PC-3 (cell line): ENCODE measurements at regions of chr6 and their contacts with region 1.

Region 1: DNA sequence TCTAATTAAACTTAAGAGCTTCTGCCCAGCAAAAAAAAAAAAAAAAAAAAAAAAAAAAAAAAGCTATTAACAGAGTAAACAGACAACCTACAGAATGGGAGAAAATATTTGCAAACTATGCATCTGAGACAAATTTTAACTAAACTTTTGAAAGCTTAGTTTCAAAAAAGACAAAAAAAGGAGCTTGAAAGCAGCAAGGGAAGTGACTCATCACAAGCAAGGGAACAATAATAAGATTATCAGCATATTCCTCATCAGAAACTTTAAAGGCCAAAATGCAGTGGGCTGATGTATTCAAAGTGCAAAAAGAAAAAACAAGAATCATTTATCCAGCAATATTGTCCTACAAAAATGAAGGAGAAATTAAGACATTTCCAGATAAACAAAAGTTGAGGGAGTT is 158.6 kb downstream of the RNF144B start:
- DNase-seq: no peak
- ATAC-seq: no peak
- H3K4me3 ChIP-seq: no peak overlapping the region
- H3K27ac ChIP-seq: no peak overlapping the region
- H3K4me1 ChIP-seq: no peaks in the 10 kb centered on the region
- H3K27me3 ChIP-seq: peaks cover 34% of the 10 kb centered on the region
- CTCF ChIP-seq: no peak

Region 2: DNA sequence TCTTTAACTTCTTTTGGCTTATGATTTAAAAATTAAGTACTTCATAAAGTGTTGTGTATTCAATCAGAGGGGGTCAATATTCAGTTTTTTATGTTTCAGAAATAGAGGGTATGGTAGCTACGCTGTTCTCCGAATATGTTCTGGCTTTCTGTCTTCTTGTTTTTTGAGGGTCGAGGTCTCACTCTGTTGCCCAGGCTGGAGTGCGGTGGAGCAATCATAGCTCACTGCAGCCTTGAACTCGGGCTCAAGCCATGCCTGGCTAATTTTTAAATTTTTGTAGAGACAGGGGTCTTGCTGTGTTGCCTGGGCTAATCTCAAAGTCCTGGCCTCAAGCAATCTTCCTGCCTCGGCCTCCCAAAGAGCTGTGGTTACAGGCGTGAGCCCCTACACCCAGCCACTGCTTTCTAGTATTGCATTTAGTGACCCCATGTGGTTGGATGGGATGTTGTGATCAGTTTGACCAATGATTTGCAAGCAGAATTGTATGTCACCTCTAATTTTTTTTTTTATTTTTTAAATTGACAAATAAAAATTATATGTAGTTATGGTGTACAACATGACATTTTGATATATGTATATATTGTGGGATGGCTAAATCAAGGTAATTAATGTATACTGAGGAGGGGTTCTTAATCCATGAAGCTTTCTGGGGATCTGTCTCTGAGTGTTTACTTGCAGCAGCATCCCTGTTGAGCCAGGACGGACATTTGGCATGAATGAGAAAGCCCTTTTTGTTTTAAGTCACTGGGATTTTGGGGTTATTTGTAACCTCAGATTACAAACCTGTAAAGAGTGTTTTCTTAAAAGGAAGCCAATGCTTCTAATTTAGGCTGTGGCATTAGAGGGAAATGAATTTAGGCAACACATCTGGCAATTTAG is 242.9 kb before region 1 on chr6:
- CTCF ChIA-PET with region 1: no interaction called
- POLR2A ChIA-PET with region 1: no interaction called
- intact Hi-C with region 1: no loop called
- DNase-seq: peak; percentile 19
- ATAC-seq: peak; percentile 53; the same call in 1 of the 2 replicates
- H3K4me3 ChIP-seq: no peak overlapping the region
- H3K27ac ChIP-seq: no peak overlapping the region
- H3K4me1 ChIP-seq: no peaks in the 10 kb centered on the region
- H3K27me3 ChIP-seq: no peaks in the 10 kb centered on the region
- CTCF ChIP-seq: peak; percentile 33; the same call in 1 of the 2 replicates

Region 3: DNA sequence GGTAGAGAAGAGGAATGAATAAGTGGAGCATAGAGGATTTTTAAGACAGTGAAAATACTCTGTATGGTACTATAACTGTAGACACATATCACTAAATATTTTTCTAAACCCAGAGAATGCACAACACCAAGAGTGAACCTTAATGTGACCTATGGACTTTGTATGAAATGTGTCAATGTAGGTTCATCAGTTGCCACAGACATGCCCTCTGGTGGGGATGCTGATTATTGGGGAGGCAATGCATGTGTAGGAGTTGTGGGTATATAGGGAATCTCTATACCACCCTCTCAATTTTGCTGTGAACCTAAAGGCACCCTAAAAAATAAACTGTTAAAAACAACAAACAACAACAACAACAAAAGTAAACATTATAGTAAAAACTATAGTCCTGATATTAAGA is 135.1 kb after region 1 on chr6:
- CTCF ChIA-PET with region 1: interaction called, 10 read pairs
- POLR2A ChIA-PET with region 1: no interaction called
- intact Hi-C with region 1: no loop called
- DNase-seq: peak; percentile 12
- ATAC-seq: peak; percentile 31; the same call in 1 of the 2 replicates
- H3K4me3 ChIP-seq: no peak overlapping the region
- H3K27ac ChIP-seq: no peak overlapping the region
- H3K4me1 ChIP-seq: no peaks in the 10 kb centered on the region
- H3K27me3 ChIP-seq: peaks cover 31% of the 10 kb centered on the region
- CTCF ChIP-seq: peak; percentile 47

Region 4: GRCh38 chr6:18733921-18734550 is 188.3 kb after region 1 on chr6:
- CTCF ChIA-PET with region 1: no interaction called
- POLR2A ChIA-PET with region 1: no interaction called
- intact Hi-C with region 1: no loop called
- DNase-seq: no peak
- ATAC-seq: no peak
- H3K4me3 ChIP-seq: no peak overlapping the region
- H3K27ac ChIP-seq: no peak overlapping the region
- H3K4me1 ChIP-seq: peaks cover 5% of the 10 kb centered on the region; the same call in 1 of the 2 replicates
- H3K27me3 ChIP-seq: 0 out of 2 replicates have a peak, but pooled peaks cover 10% of the 10 kb centered on the region
- CTCF ChIP-seq: no peak